KBM-7 (cell line): ENCODE measurements at regions of chr20 and their contacts with region 1.

Region 1: GRCh38 chr20:62386383-62387218 is at the start of gene RPS21:
- DNase-seq: peak; percentile 92

Region 2: GRCh38 chr20:61835301-61835700 is 551.3 kb before region 1 on chr20:
- in situ Hi-C with region 1: no loop called
- DNase-seq: no peak

Region 3: GRCh38 chr20:62010551-62011402 is 375.8 kb before region 1 on chr20:
- in situ Hi-C with region 1: loop called (anchors 25 kb)
- DNase-seq: peak; percentile 66